Head of caudate nucleus (tissue), 42 donors: ENCODE measurements at regions of chr1 and their contacts with region 1.

Region 1: DNA sequence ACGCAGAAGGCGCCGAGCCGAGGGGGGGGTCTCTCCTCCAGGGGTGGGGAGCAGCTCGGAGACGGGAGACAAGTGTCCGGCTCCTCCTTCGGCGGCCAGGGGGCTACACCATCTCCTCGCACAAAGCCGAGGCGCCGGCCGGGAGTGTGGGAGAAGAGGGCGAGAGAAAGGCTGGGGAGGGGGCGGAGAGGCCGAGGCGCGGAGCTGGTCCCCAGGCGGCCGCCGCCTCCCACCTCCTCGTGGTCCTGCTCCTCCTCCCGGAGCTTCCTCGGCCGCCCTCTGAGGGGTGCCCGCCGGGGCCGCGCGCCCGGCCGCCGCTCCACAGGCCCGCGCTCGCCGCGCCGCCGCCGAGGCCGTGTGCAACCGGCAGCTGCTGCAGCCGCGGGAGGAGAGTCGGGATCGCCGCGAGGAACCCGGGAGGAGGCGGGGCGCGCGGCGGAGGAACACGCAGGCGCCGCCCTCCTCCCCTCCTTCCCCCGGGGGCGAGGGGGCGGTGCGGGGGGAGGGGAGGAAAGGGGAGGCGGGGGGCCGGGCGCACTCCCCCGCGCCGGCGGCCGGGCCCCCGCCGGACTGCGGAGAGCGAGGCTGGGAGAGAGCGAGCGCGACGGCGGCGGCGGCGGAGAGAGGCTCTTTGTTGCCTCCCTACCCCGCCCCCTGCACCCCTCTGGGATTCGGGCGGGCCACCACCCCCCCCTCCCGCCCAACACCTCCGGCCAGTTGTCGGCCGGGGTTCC is at the start of gene ENAH:
- DNase-seq: peak; percentile 46 to 92 (median 84)

Region 2: GRCh38 chr1:225474986-225475820 is 177.7 kb before region 1 on chr1:
- intact Hi-C with region 1: loop called (anchors 5 kb)
- DNase-seq: peak in 40 of 42 donors; percentile 30 to 86 (median 68)

Region 3: GRCh38 chr1:225554216-225554812 is 98.6 kb before region 1 on chr1:
- intact Hi-C with region 1: loop called (anchors 10 kb)
- DNase-seq: peak in 1 of 42 donors; percentile 30

Region 4: GRCh38 chr1:225627304-225627947 is 25.5 kb before region 1 on chr1:
- intact Hi-C with region 1: no loop called
- DNase-seq: no peak

Region 5: GRCh38 chr1:225735252-225736149 is 82.6 kb after region 1 on chr1:
- intact Hi-C with region 1: no loop called
- DNase-seq: peak in 15 of 42 donors; percentile 4 to 50 (median 15)

Region 6: DNA sequence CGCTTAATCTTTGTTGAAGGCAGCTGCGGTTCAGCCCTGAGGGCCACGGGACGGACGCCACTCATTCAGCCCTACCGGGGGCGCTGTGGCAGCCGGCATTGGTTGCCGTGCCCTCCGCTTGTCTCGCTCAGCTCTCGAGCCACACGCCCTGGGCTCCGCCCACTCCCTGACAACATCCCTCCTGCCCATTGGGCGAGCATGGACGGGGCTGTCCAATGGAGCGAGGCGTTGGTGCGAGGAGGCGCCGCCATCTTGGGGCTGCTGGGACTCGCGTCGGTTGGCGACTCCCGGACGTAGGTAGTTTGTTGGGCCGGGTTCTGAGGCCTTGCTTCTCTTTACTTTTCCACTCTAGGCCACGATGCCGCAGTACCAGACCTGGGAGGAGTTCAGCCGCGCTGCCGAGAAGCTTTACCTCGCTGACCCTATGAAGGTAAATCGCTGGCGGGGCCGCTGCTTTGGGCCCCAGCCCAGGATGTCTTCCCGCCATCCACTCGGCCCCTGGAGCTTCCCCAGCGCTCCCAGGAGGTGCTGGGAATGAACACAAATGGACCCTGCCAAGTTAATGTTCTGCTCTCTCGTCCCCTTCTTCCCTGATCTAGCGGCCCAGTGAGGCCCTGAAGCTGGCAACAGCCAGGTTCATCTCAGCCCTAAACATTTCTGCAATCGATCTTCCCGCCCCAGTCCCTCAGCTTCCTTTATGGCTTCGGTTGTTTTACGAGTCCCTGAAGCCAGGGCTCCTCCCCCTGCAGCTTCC is 124.9 kb after region 1 on chr1 and contains the start of gene SRP9:
- intact Hi-C with region 1: loop called (anchors 10 kb)
- DNase-seq: peak; percentile 97 to 99 (median 99)

Region 7: DNA sequence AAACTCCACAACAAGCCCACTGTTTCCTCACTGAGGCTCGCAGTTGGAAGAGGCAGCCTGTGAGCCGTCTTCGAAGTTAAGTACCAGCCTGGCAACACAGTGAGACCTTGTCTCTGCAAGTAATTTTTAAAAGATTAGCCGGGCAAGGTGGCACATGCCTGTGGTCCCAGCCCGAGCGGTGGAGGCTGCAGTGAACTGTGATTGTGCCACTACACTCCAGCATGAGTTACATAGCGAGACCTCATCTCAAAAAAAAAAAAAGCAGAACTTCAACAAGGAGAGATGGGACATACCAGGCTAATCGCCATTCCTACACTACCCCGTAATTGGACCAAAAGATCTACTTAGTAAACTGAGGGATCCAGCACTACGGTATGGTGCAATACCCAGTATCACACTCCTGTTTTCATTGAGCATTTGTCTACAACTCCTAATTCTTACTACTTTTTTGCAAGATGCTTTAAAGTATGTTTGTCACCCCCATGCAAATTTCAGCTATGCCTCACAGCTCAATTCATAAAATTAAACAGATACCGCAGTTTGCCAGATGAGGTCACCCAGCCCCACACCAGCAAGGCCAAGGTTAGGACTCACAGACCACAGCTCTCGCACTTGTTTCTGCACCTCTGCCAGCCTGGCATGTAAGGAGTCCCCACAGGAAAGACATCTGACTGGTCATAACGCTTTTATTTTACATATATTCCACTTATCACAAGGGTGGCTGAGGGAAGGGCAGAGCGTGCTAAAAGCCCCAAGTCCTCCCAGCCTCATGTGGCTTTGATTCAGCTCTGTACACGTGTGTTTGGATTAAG is 325.2 kb after region 1 on chr1:
- intact Hi-C with region 1: loop called (anchors 10 kb)
- DNase-seq: peak in 2 of 42 donors; percentile 15 to 20